CD4-positive, alpha-beta memory T cell (primary cell): ENCODE measurements at regions of chr12 and their contacts with region 1.

Region 1: DNA sequence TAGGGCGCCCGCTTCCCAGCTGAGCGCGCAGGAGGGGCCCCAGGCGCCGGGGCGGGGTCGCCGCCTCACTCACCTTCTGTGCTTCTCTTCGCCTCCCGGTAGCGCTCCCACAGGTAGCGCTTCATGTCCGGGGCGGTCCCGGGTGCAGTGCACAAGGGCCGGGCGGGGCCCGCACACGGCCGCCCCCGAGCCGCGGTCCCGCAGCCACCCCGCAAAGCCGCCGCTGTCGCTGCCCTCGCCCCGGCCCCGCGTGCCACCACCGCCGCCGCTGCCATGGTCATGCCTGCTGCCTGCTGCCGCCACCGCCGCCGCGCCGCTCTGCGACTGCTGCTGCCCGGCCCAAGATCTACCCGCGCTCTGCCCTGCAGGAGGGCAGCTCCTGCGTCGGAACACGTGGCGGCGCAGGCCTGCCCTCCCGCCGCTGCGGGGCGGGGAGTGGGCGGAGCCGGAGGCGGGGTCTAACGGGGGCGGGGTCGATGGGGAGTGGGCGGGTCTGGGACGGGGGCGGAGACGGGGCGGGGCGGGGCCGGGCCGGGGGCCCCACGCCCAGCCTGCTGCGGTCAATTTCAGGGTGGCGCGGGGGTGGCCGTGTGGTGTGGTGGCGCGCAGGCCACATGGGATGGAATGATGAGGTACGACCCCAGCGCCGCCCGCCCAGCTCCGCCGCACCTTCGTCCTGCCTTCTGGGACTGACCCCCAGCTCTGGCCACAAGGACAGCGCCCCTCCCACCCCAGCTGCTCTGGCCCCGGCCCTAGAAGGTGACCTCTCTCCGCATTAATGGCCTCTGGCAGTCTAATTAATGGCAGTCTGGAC is at the start of gene NT5DC3:
- DNase-seq: peak; percentile 80 to 90 (median 86)
- H3K4me3 ChIP-seq: peak within 1 kb of the TSS; percentile 44 to 63
- H3K4me3 Mint-ChIP-seq: peak within 1 kb of the TSS; percentile 87 to 97 (median 89)
- H3K27ac ChIP-seq: peak within 1 kb of the TSS; percentile 35
- H3K27ac Mint-ChIP-seq: peak within 1 kb of the TSS; percentile 69 to 90 (median 86)
- H3K4me1 ChIP-seq: peaks cover 14% of the 10 kb centered on the region
- H3K4me1 Mint-ChIP-seq: peaks cover 6 to 26% (median 13%) of the 10 kb centered on the region in 4 donors
- H3K27me3 ChIP-seq: no peaks in the 10 kb centered on the region
- H3K27me3 Mint-ChIP-seq: no peaks in the 10 kb centered on the region
- total RNA-seq, gene NT5DC3: 6.1 to 6.8 TPM

Region 2: GRCh38 chr12:103495479-103496456 is 345.3 kb before region 1 on chr12 and contains the start of gene C12orf42:
- CTCF ChIA-PET with region 1: no interaction called
- POLR2A ChIA-PET with region 1: no interaction called
- intact Hi-C with region 1: loop called (anchors 5 kb)
- DNase-seq: peak; percentile 44 to 59 (median 53)
- H3K4me3 ChIP-seq: peak within 1 kb of the TSS; percentile 31 to 51
- H3K4me3 Mint-ChIP-seq: peak within 1 kb of the TSS; percentile 77 to 93 (median 82)
- H3K27ac ChIP-seq: peak within 1 kb of the TSS; percentile 31
- H3K27ac Mint-ChIP-seq: peak within 1 kb of the TSS; percentile 22 to 86 (median 71)
- H3K4me1 ChIP-seq: peaks cover 9% of the 10 kb centered on the region
- H3K4me1 Mint-ChIP-seq: peaks cover 12 to 16% (median 15%) of the 10 kb centered on the region in 4 donors
- H3K27me3 ChIP-seq: peaks cover 4% of the 10 kb centered on the region
- H3K27me3 Mint-ChIP-seq: peaks cover 10 to 12% of the 10 kb centered on the region in 2 donors
- total RNA-seq, gene C12orf42: 8.4 to 12.8 TPM